Gastrocnemius medialis (tissue), 4 donors: ENCODE measurements at regions of chr14 and their contacts with region 1.

Region 1: GRCh38 chr14:68663385-68664076 is 129.3 kb downstream of the ZFP36L1 start:
- DNase-seq: no peak
- ATAC-seq: no peak
- H3K4me3 ChIP-seq: no peak overlapping the region
- H3K27ac ChIP-seq: peak overlapping the region in 2 of 4 donors; percentile 10 to 11
- H3K4me1 ChIP-seq: peaks cover 11 to 39% of the 10 kb centered on the region in 2 donors
- H3K27me3 ChIP-seq: no peaks in the 10 kb centered on the region
- CTCF ChIP-seq: no peak
- POLR2A ChIP-seq: no peak

Region 2: GRCh38 chr14:68520637-68521556 is 142.6 kb before region 1 on chr14:
- in situ Hi-C with region 1: no loop called
- intact Hi-C with region 1: loop called (anchors 5 kb)
- DNase-seq: no peak
- ATAC-seq: no peak
- H3K4me3 ChIP-seq: no peak overlapping the region
- H3K27ac ChIP-seq: peak overlapping the region in 3 of 4 donors; percentile 2 to 51 (median 23)
- H3K4me1 ChIP-seq: peaks cover 18 to 55% of the 10 kb centered on the region in 2 donors
- H3K27me3 ChIP-seq: no peaks in the 10 kb centered on the region
- CTCF ChIP-seq: no peak
- POLR2A ChIP-seq: no peak